ENCODE measurements at regions of chr3 and their contacts with region 1.

Region 1: GRCh38 chr3:138594150-138594934 is at the start of gene CEP70:
- DNase-seq: peak; percentile 82
- CTCF ChIP-seq: peak; percentile 73

Region 2: DNA sequence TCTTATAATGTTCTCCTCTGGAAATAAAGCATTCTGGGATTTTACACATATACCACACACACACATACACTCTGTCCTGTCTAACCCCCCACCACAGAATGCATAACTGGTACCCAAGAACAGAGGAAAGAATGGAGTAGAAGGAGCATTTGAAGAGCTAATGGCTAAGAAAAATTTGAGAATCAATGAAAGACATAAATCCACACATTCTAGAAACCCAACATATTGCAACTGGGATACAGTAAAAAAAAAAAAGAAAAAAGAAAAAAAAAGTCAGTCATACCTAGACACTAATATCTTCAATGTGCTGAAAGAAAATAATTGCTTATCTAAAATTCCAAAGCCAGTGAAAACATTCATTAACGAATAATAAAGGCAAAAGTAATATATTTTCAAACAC is 21.2 kb before region 1 on chr3:
- CTCF ChIA-PET with region 1: interaction called, 26 read pairs
- POLR2A ChIA-PET with region 1: no interaction called
- DNase-seq: no peak
- CTCF ChIP-seq: no peak

Region 3: DNA sequence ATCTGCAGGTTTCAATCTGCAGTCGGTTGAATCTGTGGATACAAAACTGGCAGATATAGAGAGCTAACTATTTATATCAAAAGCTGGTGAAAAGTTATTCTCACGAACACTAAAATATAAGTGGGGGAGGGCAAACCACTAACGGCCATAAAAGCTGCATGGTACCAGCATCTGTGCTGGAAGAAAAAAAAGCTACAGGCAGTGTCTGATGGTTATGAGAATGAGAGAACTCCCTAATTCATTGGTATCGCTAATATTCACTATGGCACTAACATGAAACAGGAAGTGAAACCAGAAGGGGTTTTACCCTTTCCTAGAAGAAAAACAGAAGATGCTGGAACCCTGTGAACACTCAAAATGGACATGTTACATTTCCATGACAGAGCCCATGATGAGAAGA is 16.2 kb before region 1 on chr3:
- CTCF ChIA-PET with region 1: interaction called, 26 read pairs
- POLR2A ChIA-PET with region 1: interaction called, 3 read pairs
- DNase-seq: no peak
- CTCF ChIP-seq: no peak

Region 4: DNA sequence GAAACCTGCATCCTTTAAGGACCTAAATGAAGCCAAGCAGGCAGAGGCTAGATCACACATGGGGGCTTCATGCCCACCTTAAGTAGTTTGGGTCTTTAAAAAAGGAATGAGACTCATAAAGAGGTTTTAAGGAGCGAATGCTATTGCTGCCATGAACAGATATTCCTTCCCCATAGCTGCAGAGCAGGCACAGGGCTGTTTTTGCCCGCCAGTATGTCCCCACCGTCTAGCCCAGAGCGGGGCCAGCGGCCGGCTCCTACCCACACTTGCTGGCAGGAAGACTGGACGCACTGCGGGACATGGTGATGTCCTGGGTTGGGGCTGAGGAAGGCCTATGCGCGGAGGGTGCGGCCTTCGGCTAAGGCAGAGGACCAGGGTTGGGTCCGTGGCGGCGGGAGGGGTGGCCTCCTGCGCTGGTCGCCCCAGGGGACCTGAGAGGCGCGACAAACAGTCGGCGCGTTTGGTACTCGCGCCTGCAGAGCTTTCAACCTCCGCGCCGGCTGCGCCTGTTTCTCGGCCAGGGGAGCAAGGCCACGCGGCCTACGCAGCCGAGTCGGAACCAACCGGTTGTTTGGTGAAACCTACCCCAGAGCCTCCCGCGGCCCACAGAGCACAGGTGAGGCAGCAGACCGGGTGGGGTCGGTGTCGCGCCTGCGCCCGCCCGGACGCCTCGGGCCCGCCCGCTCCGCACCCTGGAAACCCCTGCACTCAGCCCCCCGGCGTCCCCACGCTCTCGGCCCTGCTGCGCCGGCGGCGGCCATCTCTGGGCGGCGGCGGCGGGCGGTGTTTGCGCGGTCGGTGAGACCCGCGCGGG is 14.2 kb after region 1 on chr3 and contains the start of gene FAIM:
- CTCF ChIA-PET with region 1: interaction called, 18 read pairs
- POLR2A ChIA-PET with region 1: no interaction called
- DNase-seq: peak; percentile 66
- CTCF ChIP-seq: no peak

Region 5: DNA sequence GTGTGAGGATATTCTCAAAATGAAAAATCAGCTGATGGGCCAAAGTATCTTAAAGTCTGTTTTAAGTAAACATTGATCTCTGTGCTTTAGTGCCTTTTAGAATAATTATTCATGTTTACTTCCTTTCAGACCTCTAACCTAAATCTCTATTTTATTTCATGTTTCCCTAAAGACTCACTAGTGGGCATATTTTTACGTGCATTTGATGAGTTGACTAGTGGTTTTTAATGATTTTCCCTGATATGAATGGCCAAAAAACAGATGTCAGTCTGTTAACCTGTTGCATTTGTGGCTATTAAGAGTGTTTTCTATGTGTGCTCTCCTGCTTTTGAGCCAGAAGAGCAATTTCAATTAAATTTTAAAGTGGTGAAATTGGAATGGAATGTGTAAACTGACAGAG is 21.1 kb after region 1 on chr3:
- CTCF ChIA-PET with region 1: interaction called, 13 read pairs
- POLR2A ChIA-PET with region 1: no interaction called
- DNase-seq: no peak
- CTCF ChIP-seq: no peak

Region 6: DNA sequence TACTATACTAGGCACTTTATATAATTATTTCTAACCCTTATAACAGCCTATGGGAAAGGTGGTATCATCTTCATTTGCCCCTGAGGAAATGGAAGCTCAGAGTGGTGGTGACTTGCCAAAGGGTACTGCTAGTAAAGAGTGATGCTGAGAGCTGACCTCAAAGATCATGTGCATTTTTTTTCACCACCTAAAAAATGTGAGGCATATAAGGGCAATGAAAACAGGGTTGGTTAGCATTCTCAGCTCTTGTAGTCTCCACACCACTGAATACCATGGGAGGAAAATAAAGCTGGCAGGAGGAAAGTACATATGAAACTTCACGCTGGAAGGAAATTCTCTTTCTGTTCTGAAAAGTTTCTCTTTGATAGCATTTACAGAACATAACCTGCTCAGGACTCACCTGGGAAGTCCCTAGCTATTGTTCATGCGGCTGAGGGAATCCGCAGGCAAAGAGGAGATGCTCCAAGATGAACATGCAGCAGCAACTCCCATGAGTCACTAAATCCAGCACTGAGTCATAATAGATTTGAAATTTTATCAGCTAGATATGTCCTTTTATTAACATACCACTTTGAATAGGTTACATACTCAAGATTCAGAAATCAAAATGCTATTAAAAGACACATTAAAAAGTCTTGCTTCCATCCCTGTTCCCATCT is 31.5 kb after region 1 on chr3:
- CTCF ChIA-PET with region 1: interaction called, 16 read pairs
- POLR2A ChIA-PET with region 1: no interaction called
- DNase-seq: no peak
- CTCF ChIP-seq: no peak

Region 7: DNA sequence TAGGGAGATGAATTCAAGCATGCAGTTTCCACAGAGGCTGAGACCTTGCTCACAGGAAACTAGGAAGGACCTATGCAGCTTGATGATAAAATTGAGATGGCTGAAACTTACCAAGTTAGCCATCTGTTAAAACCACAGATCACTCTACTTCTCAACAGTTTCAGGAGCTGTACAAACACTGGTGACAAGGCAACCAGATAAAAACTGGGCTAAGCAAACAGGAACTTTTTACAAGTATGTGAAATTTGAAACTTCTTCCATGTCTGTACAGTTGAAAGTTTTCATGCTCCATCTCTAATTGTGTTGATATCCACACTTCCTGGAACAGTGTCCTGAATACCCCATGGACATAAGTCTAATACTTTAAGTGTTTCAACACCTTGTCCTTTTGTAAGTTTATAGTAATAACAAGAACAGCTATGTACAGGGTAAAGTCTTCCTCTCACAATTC is 92.5 kb after region 1 on chr3:
- CTCF ChIA-PET with region 1: interaction called, 11 read pairs
- POLR2A ChIA-PET with region 1: no interaction called
- DNase-seq: peak; percentile 59
- CTCF ChIP-seq: no peak